ENCODE measurements at regions of chr13 and their contacts with region 1.

Region 1: DNA sequence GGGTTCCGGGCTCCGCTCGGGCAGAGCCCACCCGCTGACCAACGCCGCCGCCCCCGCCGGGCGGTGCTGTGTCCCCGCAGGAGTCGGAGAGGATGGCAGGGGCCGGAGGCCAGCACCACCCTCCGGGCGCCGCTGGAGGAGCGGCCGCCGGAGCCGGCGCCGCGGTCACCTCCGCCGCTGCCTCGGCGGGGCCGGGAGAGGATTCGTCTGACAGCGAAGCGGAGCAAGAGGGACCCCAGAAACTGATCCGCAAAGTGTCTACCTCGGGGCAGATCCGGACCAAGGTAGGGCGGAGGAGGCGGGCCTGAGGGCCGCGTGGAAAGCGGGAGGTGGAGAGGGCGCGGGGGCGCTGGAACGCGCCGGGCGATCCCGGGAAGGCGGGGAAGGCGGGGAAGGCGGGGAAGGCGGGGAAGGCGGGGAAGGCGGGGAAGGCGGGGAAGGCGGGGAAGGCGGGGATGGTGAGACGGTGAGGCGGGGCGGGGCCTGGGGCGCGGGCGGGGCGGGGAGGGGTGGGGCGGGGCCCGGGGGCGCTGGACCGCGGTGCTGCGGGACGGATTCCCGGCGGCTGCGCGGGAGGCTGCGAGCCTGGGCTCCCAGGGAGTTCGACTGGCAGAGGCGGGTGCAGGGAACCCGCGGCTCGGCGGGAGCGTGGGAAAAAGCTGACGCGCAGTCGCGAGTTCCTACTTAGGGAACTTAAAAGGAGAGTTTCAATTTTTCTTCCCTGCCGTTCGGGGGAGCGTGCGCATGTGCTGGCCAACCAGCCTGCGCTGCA is 420 bp downstream of the DGKH start:
- DNase-seq: peak; percentile 88 to 94
- ATAC-seq: peak; percentile 89
- H3K4me3 ChIP-seq: peak overlapping the region; percentile 55 to 98
- H3K27ac ChIP-seq: peak overlapping the region; percentile 5 to 52
- H3K4me1 ChIP-seq: no peaks in the 10 kb centered on the region
- H3K27me3 ChIP-seq: no peaks in the 10 kb centered on the region

Region 2: DNA sequence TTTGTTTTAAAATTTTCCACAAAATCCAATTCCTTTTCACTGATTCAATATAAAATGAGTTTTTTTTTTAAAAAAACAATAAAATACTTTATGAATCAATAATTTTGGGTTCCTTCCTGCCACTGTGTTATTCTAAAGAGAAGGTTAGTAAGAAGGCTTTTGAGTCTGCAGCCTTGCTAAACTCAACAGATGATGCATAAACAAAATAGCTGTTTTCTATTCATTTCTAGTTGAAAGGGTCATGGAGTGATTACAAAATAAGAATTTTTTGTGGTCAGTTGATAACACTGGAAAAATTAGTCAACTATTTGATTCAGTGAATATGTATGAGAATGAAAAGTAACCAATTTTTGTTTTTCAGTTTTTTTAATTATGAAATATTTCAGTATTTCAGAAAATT is 257.8 kb before region 1 on chr13:
- intact Hi-C with region 1: no loop called
- DNase-seq: no peak
- ATAC-seq: no peak
- H3K4me3 ChIP-seq: no peak overlapping the region
- H3K27ac ChIP-seq: no peak overlapping the region
- H3K4me1 ChIP-seq: peaks cover 0 to 2% of the 10 kb centered on the region in 2 donors
- H3K27me3 ChIP-seq: no peaks in the 10 kb centered on the region

Region 3: DNA sequence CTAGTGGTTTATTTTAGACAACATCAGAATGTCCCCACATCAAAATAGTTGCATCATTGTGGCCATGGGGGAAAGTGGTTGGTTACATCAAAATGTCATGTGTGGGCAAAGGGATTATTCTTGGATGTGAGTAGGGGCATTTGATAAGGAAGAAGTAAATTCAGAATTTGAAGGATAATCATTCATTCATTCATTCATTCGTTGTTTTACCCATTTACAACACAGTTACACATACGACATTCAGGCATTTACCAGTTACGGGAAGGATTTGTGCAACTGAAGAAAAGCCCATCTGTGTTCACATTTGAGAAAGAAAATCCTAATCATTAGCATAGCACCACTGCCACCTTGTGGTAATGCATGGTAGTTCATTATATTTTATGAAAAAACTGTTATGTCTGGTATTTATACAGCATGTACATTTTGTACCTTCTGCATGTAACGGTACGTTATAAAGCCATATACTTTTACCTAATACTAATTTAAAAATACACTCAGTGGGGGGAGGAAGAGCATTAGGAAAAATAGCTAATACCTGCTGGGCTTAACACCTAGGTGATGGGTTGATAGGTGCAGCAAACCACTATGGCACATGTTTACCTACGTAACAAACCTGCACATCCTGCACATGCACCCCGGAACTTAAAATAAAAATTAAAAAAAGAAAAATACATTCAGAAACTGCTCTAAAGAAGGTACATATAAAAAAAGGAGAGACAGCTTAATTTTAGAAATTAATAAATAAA is 61.7 kb after region 1 on chr13:
- intact Hi-C with region 1: loop called in 1 of 2 experiments (anchors 5 kb)
- DNase-seq: no peak
- ATAC-seq: peak; percentile 80
- H3K4me3 ChIP-seq: no peak overlapping the region
- H3K27ac ChIP-seq: no peak overlapping the region
- H3K4me1 ChIP-seq: no peaks in the 10 kb centered on the region
- H3K27me3 ChIP-seq: no peaks in the 10 kb centered on the region